ENCODE measurements at regions of chr14 and their contacts with region 1.

Region 1: DNA sequence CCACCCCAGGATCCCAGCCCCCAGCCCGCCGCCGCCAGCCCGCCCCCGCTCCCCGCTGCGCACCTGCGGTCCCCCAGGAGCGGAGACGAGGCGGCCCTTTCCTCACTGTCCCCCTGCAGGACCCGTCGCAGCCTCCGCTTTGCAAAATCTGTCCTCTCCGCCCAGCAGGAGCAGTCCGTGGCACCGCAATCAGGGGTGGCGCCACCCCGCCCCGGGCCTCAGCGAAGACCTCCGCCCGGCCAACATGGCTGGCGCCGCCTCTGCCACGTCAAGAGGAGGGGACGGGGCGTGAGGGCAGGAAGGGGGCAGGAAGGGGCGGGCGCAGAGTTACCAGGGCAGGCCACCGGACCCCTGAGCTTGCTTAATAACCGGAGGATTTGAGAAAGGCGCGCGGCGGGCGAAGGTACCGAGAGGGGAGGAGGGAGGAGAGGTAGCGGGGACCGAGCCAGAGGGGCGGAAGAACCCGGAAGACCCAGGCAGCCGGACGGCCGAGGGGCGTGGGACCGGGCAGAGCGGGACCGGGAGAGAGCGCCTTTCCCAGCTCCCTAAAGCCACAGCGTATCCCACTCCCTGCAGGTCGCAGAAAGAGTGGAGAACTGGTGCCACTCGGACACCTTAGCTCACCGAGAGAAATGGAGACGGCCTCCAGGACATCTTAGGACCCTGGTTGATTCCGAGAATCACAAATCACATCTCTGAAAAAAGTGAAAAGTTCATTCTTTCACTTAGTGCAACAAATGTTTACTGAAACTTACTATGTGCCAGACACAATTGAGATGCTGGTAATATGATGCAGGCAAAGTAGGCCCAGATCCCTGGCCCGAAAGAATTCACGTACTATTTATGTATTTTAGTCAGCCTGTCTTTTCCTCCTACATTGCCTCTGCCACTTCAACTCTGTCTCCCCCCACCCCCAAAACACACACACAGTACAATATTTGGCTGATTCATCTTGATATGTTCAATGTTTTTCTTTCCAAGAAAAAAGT is at the start of gene SEC23A:
- DNase-seq: peak; percentile 95 to 97
- ATAC-seq: peak; percentile 99
- H3K4me3 ChIP-seq: peak within 1 kb of the TSS; percentile 73 to 93
- H3K27ac ChIP-seq: peak within 1 kb of the TSS; percentile 96 to 97
- H3K4me1 ChIP-seq: peaks cover 0 to 4% of the 10 kb centered on the region in 2 donors
- H3K27me3 ChIP-seq: no peaks in the 10 kb centered on the region
- total RNA-seq, gene SEC23A: 143 to 172 TPM

Region 2: GRCh38 chr14:39266871-39267591 is 163.8 kb after region 1 on chr14:
- intact Hi-C with region 1: loop called in 1 of 2 experiments (anchors 2 kb)
- DNase-seq: peak; percentile 91 to 93
- ATAC-seq: peak; percentile 97
- H3K4me3 ChIP-seq: peak overlapping the region; percentile 63 to 86
- H3K27ac ChIP-seq: peak overlapping the region; percentile 47 to 68
- H3K4me1 ChIP-seq: no peaks in the 10 kb centered on the region
- H3K27me3 ChIP-seq: no peaks in the 10 kb centered on the region

Region 3: DNA sequence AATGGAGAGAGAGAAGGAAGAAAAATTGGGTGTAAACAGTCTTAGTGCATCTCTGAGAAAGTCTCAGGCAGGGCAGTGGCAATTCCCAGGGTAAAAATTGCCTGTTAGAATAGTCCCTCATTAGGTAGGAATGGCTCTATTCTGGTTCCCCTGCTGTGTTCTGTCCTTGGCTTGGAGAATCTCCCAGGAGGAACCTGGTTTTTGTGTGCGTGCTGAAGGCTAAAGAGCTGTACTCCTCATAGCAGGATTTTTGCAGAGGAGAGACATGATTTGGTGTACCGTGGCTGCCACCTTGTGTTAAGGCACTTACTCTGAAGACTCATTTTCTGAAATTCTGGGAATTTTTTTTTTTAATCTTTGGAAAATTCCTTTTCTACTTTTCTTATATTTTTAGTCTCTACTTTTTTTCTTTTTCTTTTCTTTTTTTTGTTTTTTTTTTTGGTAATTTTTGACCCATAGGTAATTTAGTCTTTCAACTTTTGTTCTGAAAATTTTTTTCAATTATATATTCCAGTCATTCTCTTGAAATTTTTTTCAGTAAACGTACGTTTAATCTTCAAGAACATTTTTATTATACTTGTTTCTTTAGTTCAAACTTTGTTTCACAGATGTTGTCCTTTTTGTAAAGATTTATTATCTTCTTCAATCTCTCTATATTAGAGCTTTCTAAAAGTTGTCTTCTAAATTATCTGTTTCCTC is 265.1 kb after region 1 on chr14:
- intact Hi-C with region 1: loop called in 1 of 2 experiments (anchors 5 kb)
- DNase-seq: peak in 1 of 2 donors; percentile 54
- ATAC-seq: peak; percentile 60
- H3K4me3 ChIP-seq: no peak overlapping the region
- H3K27ac ChIP-seq: no peak overlapping the region
- H3K4me1 ChIP-seq: peaks cover 0 to 1% of the 10 kb centered on the region in 2 donors
- H3K27me3 ChIP-seq: no peaks in the 10 kb centered on the region

Region 4: GRCh38 chr14:39432179-39432618 is 328.9 kb after region 1 on chr14 and contains the start of gene FBXO33:
- intact Hi-C with region 1: loop called in 1 of 2 experiments (anchors 10 kb)
- DNase-seq: peak; percentile 98 to 99
- ATAC-seq: peak; percentile 96
- H3K4me3 ChIP-seq: peak within 1 kb of the TSS; percentile 96 to 97
- H3K27ac ChIP-seq: peak within 1 kb of the TSS; percentile 74 to 100
- H3K4me1 ChIP-seq: peaks cover 2 to 11% of the 10 kb centered on the region in 2 donors
- H3K27me3 ChIP-seq: no peaks in the 10 kb centered on the region
- total RNA-seq, gene FBXO33: 13.0 to 14.3 TPM